Activated CD4-positive, alpha-beta memory T cell treated with anti-CD3 and anti-CD28 coated beads for 36 hours (primary cell): ENCODE measurements at regions of chr1 and their contacts with region 1.

Region 1: GRCh38 chr1:75423616-75424015 is 187.3 kb downstream of the SLC44A5 start:
- DNase-seq: no peak
- H3K4me3 Mint-ChIP-seq: no peak overlapping the region
- H3K27ac Mint-ChIP-seq: no peak overlapping the region
- H3K4me1 Mint-ChIP-seq: no peaks in the 10 kb centered on the region
- H3K27me3 Mint-ChIP-seq: no peaks in the 10 kb centered on the region

Region 2: DNA sequence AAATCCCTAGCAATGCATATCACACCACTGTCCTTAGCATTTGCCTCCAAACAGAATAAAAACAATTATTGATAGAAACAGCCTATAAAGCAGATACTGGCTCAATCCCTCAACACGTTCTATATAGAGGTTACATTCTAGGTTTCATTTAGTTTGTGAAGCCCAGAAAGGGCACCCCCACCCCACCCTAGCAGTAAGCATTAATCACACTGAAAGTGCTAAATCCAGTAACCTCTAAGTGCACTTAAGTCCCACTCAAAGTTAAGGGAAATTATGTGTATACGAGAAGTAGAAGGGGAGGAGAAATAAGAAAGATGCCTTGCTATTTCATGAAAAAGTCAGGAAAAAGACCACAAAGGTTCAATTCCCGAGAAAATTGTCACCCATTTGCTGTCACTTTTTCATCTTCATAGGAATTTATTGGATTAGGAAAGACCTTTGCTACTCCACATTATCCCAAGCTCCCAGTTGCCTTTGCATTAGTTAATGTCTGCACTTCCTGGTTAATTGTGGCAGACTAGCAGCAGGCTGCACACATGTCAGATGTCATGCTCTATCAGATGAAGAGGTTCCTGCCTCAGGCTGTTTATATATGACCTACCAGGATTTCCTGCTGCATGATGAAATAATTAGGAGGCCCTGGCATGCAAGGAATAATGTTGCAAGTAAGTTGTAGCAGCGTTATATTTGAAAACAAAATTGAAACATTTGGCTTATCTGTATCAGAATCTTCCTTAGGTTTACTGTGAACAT is 343.9 kb before region 1 on chr1:
- CTCF ChIA-PET with region 1: no interaction called
- POLR2A ChIA-PET with region 1: no interaction called
- intact Hi-C with region 1: no loop called
- DNase-seq: no peak
- H3K4me3 Mint-ChIP-seq: no peak overlapping the region
- H3K27ac Mint-ChIP-seq: no peak overlapping the region
- H3K4me1 Mint-ChIP-seq: no peaks in the 10 kb centered on the region
- H3K27me3 Mint-ChIP-seq: no peaks in the 10 kb centered on the region

Region 3: DNA sequence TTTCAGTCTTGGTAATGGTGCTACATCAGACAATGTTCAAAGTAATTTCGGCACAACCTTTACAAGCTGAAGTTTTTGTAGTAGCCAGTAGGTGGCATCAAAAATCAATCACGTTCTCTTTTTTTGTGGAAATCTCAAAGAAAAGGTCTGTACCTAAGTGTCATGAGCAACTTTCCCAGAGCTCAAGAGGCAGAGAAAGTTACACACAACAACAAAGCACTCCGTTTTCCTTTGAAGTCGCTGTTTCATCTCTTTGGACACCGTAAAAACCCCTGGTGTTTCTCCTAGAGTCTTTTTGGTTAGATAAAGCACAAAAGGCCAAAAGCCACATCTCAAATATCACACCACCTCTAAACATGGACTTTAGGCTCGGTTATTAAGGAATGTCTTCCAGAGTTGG is 157.8 kb before region 1 on chr1:
- CTCF ChIA-PET with region 1: interaction called, 3 read pairs
- POLR2A ChIA-PET with region 1: no interaction called
- intact Hi-C with region 1: loop called (anchors 5 kb)
- DNase-seq: no peak
- H3K4me3 Mint-ChIP-seq: no peak overlapping the region
- H3K27ac Mint-ChIP-seq: no peak overlapping the region
- H3K4me1 Mint-ChIP-seq: no peaks in the 10 kb centered on the region
- H3K27me3 Mint-ChIP-seq: no peaks in the 10 kb centered on the region